Lower leg skin (tissue), 4 donors: ENCODE measurements at regions of chr17 and their contacts with region 1.

Region 1: GRCh38 chr17:61619493-61619892 is 28.5 kb upstream of the NACA2 start:
- DNase-seq: no peak
- H3K4me3 ChIP-seq: no peak overlapping the region
- CTCF ChIP-seq: no peak
- POLR2A ChIP-seq: no peak

Region 2: GRCh38 chr17:60079401-60080245 is 1539.9 kb before region 1 on chr17:
- intact Hi-C with region 1: loop called (anchors 10 kb)
- DNase-seq: no peak
- H3K4me3 ChIP-seq: peak overlapping the region; percentile 53
- CTCF ChIP-seq: no peak
- POLR2A ChIP-seq: no peak